B cell (primary cell): ENCODE measurements at regions of chr22 and their contacts with region 1.

Region 1: DNA sequence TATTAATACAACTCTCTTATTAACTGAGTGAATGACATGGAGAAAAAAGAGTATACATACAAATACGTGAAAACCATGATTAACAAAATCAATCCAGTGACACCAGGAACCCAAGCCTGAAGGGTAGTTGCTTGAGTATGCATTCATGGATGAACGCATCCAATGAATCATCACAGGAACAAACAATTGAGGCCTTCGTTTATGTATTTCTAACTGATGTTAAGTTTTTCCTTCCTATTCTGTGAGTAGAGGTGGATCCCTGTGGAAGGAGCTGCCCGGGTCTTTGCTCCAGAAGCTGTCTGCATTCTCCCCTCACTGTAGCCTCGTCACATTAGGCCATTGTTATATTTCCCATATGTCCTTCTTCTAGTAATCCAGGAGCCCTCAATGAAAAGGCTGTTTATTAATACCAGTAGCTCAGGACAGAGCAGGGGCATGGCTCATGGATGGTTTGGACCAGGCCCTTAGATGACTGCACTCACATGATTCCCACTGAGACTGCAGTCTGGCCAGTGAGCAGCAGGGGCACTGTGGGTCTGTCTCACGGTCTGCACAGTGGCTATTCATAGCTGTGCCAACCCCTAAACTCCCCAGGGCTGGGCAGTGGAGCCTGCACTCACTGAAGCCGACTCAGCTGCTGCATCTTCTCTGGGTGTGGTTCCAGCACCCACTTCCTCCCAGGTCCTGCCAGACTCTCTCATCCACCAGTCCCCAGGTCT is 128.1 kb upstream of the TOP3B start:
- DNase-seq: peak; percentile 94
- ATAC-seq: peak; percentile 96
- H3K4me3 ChIP-seq: peak overlapping the region in 1 of 5 experiments; percentile 48
- H3K4me3 Mint-ChIP-seq: peak overlapping the region; percentile 78
- H3K27ac ChIP-seq: peak overlapping the region; percentile 78 to 93
- H3K27ac Mint-ChIP-seq: peak overlapping the region; percentile 97
- H3K4me1 ChIP-seq: peaks cover 42 to 44% of the 10 kb centered on the region in 2 donors
- H3K4me1 Mint-ChIP-seq: peaks cover 46% of the 10 kb centered on the region
- H3K27me3 ChIP-seq: no peaks in the 10 kb centered on the region
- H3K27me3 Mint-ChIP-seq: no peaks in the 10 kb centered on the region
- CTCF ChIP-seq: peak; percentile 80

Region 2: DNA sequence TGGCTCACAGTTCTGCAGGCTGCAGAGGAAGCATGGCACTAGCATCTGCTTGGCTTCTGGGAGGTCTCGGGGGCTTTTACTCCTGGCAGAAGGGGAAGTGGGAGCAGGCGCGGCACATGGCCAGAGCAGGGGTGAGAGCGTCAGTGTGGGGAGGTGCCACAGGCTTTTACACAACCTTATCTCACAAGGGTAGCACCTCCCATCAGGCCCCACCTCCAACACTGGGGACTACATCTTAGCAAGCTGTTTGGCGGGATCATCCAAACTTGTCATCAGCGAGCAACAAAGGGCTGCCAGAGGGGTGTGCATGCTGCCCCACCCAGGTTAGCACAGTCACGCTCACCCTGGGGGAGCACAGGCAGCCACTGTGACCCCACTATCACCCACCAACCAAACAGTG is 356.2 kb before region 1 on chr22:
- CTCF ChIA-PET with region 1: no interaction called
- POLR2A ChIA-PET with region 1: no interaction called
- intact Hi-C with region 1: no loop called
- DNase-seq: peak; percentile 77
- ATAC-seq: peak; percentile 96
- H3K4me3 ChIP-seq: no peak overlapping the region
- H3K4me3 Mint-ChIP-seq: peak overlapping the region; percentile 26
- H3K27ac ChIP-seq: no peak overlapping the region
- H3K27ac Mint-ChIP-seq: no peak overlapping the region
- H3K4me1 ChIP-seq: peaks cover 10 to 17% of the 10 kb centered on the region in 2 donors
- H3K4me1 Mint-ChIP-seq: peaks cover 23% of the 10 kb centered on the region
- H3K27me3 ChIP-seq: no peaks in the 10 kb centered on the region
- H3K27me3 Mint-ChIP-seq: no peaks in the 10 kb centered on the region
- CTCF ChIP-seq: no peak

Region 3: DNA sequence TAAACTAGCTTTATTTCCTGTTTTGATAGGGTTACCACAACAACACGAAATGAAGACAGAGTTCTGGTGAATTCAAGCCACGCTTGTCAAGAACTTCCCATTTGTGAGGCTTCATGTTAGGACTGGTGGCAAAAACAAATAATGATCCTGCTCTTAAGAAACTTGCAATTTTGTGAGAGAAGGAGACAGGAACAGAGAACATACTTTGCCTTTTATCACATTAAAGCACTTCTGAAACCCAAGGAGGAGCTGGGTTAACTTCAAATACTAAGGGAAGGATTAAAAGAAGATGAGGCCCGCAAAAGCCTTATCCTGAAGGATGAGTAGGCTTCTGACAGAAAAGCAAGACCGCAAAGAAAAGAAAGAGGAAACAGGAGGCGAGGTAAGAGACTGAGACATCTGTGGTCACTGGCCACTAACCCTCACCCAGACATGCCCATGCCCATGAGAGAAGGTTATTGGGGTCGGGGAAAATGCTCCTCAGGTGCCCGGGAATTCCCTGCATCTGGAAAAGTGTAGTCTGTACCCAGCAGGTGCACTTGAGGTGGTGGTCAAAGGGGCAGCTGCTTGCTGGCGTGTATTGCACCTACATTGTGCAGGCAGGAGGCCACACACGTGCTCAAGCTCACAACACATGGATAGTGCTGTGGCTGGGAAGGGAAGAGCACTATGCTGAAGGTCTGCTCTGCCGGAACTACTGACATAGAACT is 293.8 kb before region 1 on chr22:
- CTCF ChIA-PET with region 1: no interaction called
- POLR2A ChIA-PET with region 1: no interaction called
- intact Hi-C with region 1: loop called (anchors 10 kb)
- DNase-seq: peak; percentile 92
- ATAC-seq: peak; percentile 88
- H3K4me3 ChIP-seq: peak overlapping the region; percentile 12 to 54 (median 48)
- H3K4me3 Mint-ChIP-seq: peak overlapping the region; percentile 91
- H3K27ac ChIP-seq: peak overlapping the region; percentile 89 to 96
- H3K27ac Mint-ChIP-seq: peak overlapping the region; percentile 97
- H3K4me1 ChIP-seq: peaks cover 57 to 62% of the 10 kb centered on the region in 2 donors
- H3K4me1 Mint-ChIP-seq: peaks cover 73% of the 10 kb centered on the region
- H3K27me3 ChIP-seq: no peaks in the 10 kb centered on the region
- H3K27me3 Mint-ChIP-seq: no peaks in the 10 kb centered on the region
- CTCF ChIP-seq: no peak

Region 4: GRCh38 chr22:21990445-21991303 is 120.0 kb before region 1 on chr22:
- CTCF ChIA-PET with region 1: no interaction called
- POLR2A ChIA-PET with region 1: no interaction called
- intact Hi-C with region 1: no loop called
- DNase-seq: no peak
- ATAC-seq: no peak
- H3K4me3 ChIP-seq: no peak overlapping the region
- H3K4me3 Mint-ChIP-seq: no peak overlapping the region
- H3K27ac ChIP-seq: no peak overlapping the region
- H3K27ac Mint-ChIP-seq: no peak overlapping the region
- H3K4me1 ChIP-seq: no peaks in the 10 kb centered on the region
- H3K4me1 Mint-ChIP-seq: no peaks in the 10 kb centered on the region
- H3K27me3 ChIP-seq: no peaks in the 10 kb centered on the region
- H3K27me3 Mint-ChIP-seq: no peaks in the 10 kb centered on the region
- CTCF ChIP-seq: no peak

Region 5: GRCh38 chr22:22043296-22044078 is 67.2 kb before region 1 on chr22:
- CTCF ChIA-PET with region 1: interaction called, 22 read pairs
- POLR2A ChIA-PET with region 1: interaction called, 3 read pairs
- intact Hi-C with region 1: no loop called
- DNase-seq: peak; percentile 42
- ATAC-seq: peak; percentile 70
- H3K4me3 ChIP-seq: peak overlapping the region in 2 of 5 experiments; percentile 48 to 54
- H3K4me3 Mint-ChIP-seq: peak overlapping the region; percentile 67
- H3K27ac ChIP-seq: no peak overlapping the region
- H3K27ac Mint-ChIP-seq: peak overlapping the region; percentile 85
- H3K4me1 ChIP-seq: peaks cover 38 to 54% of the 10 kb centered on the region in 2 donors
- H3K4me1 Mint-ChIP-seq: peaks cover 75% of the 10 kb centered on the region
- H3K27me3 ChIP-seq: no peaks in the 10 kb centered on the region
- H3K27me3 Mint-ChIP-seq: no peaks in the 10 kb centered on the region
- CTCF ChIP-seq: no peak

Region 6: GRCh38 chr22:22138915-22139314 is 28.2 kb after region 1 on chr22:
- CTCF ChIA-PET with region 1: interaction called, 15 read pairs
- POLR2A ChIA-PET with region 1: interaction called, 6 read pairs
- intact Hi-C with region 1: no loop called
- DNase-seq: no peak
- ATAC-seq: no peak
- H3K4me3 ChIP-seq: no peak overlapping the region
- H3K4me3 Mint-ChIP-seq: no peak overlapping the region
- H3K27ac ChIP-seq: no peak overlapping the region
- H3K27ac Mint-ChIP-seq: no peak overlapping the region
- H3K4me1 ChIP-seq: no peaks in the 10 kb centered on the region
- H3K4me1 Mint-ChIP-seq: peaks cover 4% of the 10 kb centered on the region
- H3K27me3 ChIP-seq: no peaks in the 10 kb centered on the region
- H3K27me3 Mint-ChIP-seq: no peaks in the 10 kb centered on the region
- CTCF ChIP-seq: no peak

Region 7: GRCh38 chr22:22161924-22162851 is 51.5 kb after region 1 on chr22:
- CTCF ChIA-PET with region 1: interaction called, 31 read pairs
- POLR2A ChIA-PET with region 1: interaction called, 13 read pairs
- intact Hi-C with region 1: loop called (anchors 1 kb)
- DNase-seq: peak; percentile 80
- ATAC-seq: peak; percentile 95
- H3K4me3 ChIP-seq: peak overlapping the region in 4 of 5 experiments; percentile 14 to 70 (median 38)
- H3K4me3 Mint-ChIP-seq: peak overlapping the region; percentile 89
- H3K27ac ChIP-seq: peak overlapping the region; percentile 96 to 98
- H3K27ac Mint-ChIP-seq: peak overlapping the region; percentile 98
- H3K4me1 ChIP-seq: peaks cover 75 to 82% of the 10 kb centered on the region in 2 donors
- H3K4me1 Mint-ChIP-seq: peaks cover 85% of the 10 kb centered on the region
- H3K27me3 ChIP-seq: no peaks in the 10 kb centered on the region
- H3K27me3 Mint-ChIP-seq: no peaks in the 10 kb centered on the region
- CTCF ChIP-seq: no peak

Region 8: GRCh38 chr22:22201185-22201929 is 90.7 kb after region 1 on chr22:
- CTCF ChIA-PET with region 1: interaction called, 48 read pairs
- POLR2A ChIA-PET with region 1: interaction called, 9 read pairs
- intact Hi-C with region 1: no loop called
- DNase-seq: peak; percentile 69
- ATAC-seq: peak; percentile 72
- H3K4me3 ChIP-seq: no peak overlapping the region
- H3K4me3 Mint-ChIP-seq: peak overlapping the region; percentile 59
- H3K27ac ChIP-seq: peak overlapping the region; percentile 37 to 47
- H3K27ac Mint-ChIP-seq: peak overlapping the region; percentile 71
- H3K4me1 ChIP-seq: peaks cover 58 to 60% of the 10 kb centered on the region in 2 donors
- H3K4me1 Mint-ChIP-seq: peaks cover 61% of the 10 kb centered on the region
- H3K27me3 ChIP-seq: no peaks in the 10 kb centered on the region
- H3K27me3 Mint-ChIP-seq: no peaks in the 10 kb centered on the region
- CTCF ChIP-seq: peak; percentile 80

Region 9: DNA sequence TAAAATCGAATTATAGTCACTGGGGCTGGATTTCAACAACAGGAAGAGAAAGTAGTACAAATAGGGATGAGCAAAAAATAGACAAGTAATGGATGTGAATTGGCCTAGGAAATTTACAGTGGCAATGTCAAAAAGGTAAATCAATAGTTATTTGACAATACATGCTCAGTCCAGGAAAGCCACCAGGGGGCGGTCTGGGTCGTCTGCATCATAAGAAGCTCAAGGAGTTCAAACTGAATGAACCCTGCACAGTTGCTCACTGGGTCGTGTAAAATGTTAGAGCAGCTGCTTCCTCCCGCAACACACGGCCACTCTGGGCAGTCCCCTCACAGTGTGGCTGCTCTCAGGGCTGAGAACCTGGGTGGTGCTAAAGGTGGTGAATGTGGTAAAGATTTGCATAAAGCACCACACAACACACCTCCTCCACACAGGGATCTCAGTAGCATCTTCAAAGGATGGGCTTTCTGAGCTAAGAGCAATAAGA is 312.0 kb after region 1 on chr22:
- CTCF ChIA-PET with region 1: interaction called, 5 read pairs
- POLR2A ChIA-PET with region 1: no interaction called
- intact Hi-C with region 1: loop called (anchors 1 kb)
- DNase-seq: peak; percentile 96
- ATAC-seq: peak; percentile 99
- H3K4me3 ChIP-seq: no peak overlapping the region
- H3K4me3 Mint-ChIP-seq: peak overlapping the region; percentile 33
- H3K27ac ChIP-seq: peak overlapping the region in 1 of 2 donors; percentile 42
- H3K27ac Mint-ChIP-seq: peak overlapping the region; percentile 72
- H3K4me1 ChIP-seq: peaks cover 61 to 63% of the 10 kb centered on the region in 2 donors
- H3K4me1 Mint-ChIP-seq: peaks cover 65% of the 10 kb centered on the region
- H3K27me3 ChIP-seq: no peaks in the 10 kb centered on the region
- H3K27me3 Mint-ChIP-seq: no peaks in the 10 kb centered on the region
- CTCF ChIP-seq: peak; percentile 92